Activated naive CD4-positive, alpha-beta T cell treated with anti-CD3 and anti-CD28 coated beads, Interleukin-2, amount 10 ng/mL, durations not matched to agents 7 days and 5 days (primary cell): ENCODE measurements at regions of chr17 and their contacts with region 1.

Region 1: GRCh38 chr17:48724251-48725003 is 1.4 kb downstream of the PRAC2 start:
- DNase-seq: peak; percentile 88
- H3K4me3 Mint-ChIP-seq: peak overlapping the region; percentile 22
- H3K27ac Mint-ChIP-seq: peak overlapping the region; percentile 74
- H3K4me1 Mint-ChIP-seq: peaks cover 42% of the 10 kb centered on the region
- H3K27me3 Mint-ChIP-seq: peaks cover 99% of the 10 kb centered on the region

Region 2: GRCh38 chr17:48747445-48748363 is 23.3 kb after region 1 on chr17:
- CTCF ChIA-PET with region 1: interaction called, 28 read pairs
- DNase-seq: no peak
- H3K4me3 Mint-ChIP-seq: no peak overlapping the region
- H3K27ac Mint-ChIP-seq: no peak overlapping the region
- H3K4me1 Mint-ChIP-seq: peaks cover 6% of the 10 kb centered on the region
- H3K27me3 Mint-ChIP-seq: peaks cover 98% of the 10 kb centered on the region

Region 3: DNA sequence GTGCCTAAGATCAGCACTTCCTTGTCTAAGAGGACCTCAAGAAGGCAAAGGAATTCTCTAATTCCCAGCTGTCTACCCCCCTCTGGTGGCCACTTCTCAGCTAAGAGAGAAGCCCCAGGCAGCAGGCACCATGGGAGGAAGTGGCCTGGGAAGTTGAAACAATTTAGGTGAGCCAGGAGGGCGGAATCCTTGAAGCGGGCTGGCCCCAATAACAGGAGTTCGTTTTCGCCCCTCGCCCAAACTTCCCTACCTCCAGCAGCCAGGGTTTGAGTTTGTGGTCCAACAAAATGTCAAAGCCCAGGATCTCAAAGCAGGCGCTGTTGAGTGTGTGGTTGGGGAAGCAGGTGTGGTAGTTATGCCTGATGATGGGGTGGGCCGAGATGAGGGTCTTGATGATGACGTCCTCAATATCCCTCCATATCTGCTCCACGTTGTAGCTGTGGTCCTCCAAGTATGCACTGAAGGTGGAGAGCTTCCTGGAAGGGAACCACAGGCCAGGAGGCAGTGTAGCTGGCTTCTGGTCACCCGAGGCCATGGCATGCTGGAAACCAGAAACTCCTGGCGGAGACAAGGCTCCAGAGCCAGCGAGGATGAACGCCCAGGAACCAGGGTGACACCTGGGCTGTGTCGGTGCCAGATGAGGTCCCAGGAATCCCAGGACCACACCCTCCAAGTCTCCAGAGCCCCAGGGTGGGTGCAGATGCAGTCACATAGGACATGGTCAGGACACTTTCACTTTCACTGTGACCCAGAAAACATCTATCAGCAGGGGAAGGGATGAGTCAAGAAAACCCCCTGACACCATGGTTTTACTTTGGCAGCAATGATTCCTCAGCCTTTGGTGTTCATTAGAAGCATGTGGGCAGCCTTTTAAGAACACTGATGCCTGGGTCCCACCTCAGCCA is 67.0 kb after region 1 on chr17:
- CTCF ChIA-PET with region 1: interaction called, 12 read pairs
- DNase-seq: peak; percentile 35
- H3K4me3 Mint-ChIP-seq: no peak overlapping the region
- H3K27ac Mint-ChIP-seq: no peak overlapping the region
- H3K4me1 Mint-ChIP-seq: peaks cover 16% of the 10 kb centered on the region
- H3K27me3 Mint-ChIP-seq: peaks cover 91% of the 10 kb centered on the region